PC-3 (cell line): ENCODE measurements at regions of chr10 and their contacts with region 1.

Region 1: DNA sequence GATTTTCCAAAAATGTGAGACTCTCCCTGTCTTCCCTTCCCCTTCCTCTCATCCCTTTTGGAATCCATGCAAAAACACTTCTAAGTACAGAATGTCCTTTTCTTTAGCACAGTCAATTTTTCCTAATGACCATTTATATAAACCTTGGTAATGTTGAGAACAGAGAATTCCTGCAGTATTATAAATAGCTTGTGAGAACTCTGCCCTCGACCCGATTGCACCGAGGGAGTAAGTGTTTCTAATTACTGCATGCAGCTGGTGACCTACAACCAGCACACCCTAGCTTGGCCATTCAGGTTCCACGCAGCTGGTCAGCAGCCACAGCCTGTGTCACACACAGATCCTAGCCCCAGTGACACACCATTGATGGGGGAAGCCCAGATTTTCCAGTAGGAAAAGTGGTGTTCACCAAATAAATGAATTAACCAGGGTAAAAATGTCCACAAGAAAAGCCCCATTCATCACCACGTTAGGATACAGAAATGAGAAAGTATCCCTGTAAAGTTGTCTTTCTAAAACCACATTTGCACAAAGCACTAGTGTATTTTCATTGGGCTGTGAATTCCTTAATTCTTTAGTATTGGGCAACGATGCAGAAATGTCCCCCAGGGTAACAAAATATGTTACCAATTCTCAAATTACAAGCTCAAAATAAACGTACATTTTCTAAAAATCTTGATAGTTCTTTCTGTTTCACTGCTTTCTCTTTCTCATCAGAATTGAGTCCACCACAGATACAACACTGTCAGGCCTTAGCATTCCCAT is 499.0 kb upstream of the KLF6 start:
- DNase-seq: no peak
- ATAC-seq: no peak
- H3K4me3 ChIP-seq: no peak overlapping the region
- H3K27ac ChIP-seq: no peak overlapping the region
- H3K4me1 ChIP-seq: peaks cover 29% of the 10 kb centered on the region
- H3K27me3 ChIP-seq: no peaks in the 10 kb centered on the region
- CTCF ChIP-seq: no peak

Region 2: GRCh38 chr10:4131407-4132228 is 152.4 kb before region 1 on chr10:
- CTCF ChIA-PET with region 1: no interaction called
- POLR2A ChIA-PET with region 1: no interaction called
- intact Hi-C with region 1: loop called (anchors 5 kb)
- DNase-seq: peak; percentile 66
- ATAC-seq: peak; percentile 91
- H3K4me3 ChIP-seq: peak overlapping the region; percentile 44
- H3K27ac ChIP-seq: peak overlapping the region; percentile 60
- H3K4me1 ChIP-seq: peaks cover 31% of the 10 kb centered on the region
- H3K27me3 ChIP-seq: no peaks in the 10 kb centered on the region
- CTCF ChIP-seq: no peak

Region 3: DNA sequence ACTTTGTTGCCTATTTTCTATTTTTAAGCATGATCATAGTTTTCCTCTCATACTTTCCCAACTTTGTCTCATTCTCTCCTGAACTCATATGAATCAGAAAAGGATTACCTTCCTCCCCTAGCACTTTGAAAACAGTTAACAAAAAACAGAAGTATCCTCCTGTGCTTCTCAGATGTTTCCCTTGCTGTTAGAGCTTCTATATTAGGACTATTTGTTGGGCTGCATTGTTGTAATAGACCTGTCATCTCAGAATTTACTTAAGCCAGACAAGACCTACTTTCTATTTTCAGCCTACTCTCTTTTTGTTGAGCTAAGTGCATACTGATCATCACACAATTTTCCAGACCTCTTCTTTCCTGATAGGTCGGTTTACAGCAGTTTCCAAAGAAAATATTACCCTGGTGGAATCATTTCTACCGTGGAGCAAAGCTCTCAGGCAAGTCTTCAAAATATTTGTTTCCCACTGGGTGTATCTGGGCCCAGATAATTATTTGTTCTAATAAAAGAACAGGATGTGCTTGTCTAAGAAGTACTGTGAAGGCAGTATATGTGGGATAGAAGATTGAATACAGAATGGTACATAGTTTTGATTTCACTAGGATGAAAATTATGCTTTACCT is 87.1 kb before region 1 on chr10:
- CTCF ChIA-PET with region 1: no interaction called
- POLR2A ChIA-PET with region 1: no interaction called
- intact Hi-C with region 1: no loop called
- DNase-seq: no peak
- ATAC-seq: no peak
- H3K4me3 ChIP-seq: no peak overlapping the region
- H3K27ac ChIP-seq: no peak overlapping the region
- H3K4me1 ChIP-seq: peaks cover 24% of the 10 kb centered on the region
- H3K27me3 ChIP-seq: no peaks in the 10 kb centered on the region
- CTCF ChIP-seq: no peak

Region 4: GRCh38 chr10:4303048-4303447 is 19.0 kb after region 1 on chr10:
- CTCF ChIA-PET with region 1: no interaction called
- POLR2A ChIA-PET with region 1: no interaction called
- intact Hi-C with region 1: no loop called
- DNase-seq: no peak
- ATAC-seq: no peak
- H3K4me3 ChIP-seq: no peak overlapping the region
- H3K27ac ChIP-seq: no peak overlapping the region
- H3K4me1 ChIP-seq: no peaks in the 10 kb centered on the region
- H3K27me3 ChIP-seq: no peaks in the 10 kb centered on the region
- CTCF ChIP-seq: no peak

Region 5: GRCh38 chr10:4344511-4344994 is 60.5 kb after region 1 on chr10:
- CTCF ChIA-PET with region 1: no interaction called
- POLR2A ChIA-PET with region 1: no interaction called
- intact Hi-C with region 1: loop called (anchors 2 kb)
- DNase-seq: peak; percentile 90
- ATAC-seq: peak; percentile 97
- H3K4me3 ChIP-seq: peak overlapping the region; percentile 30; the same call in 1 of the 2 replicates
- H3K27ac ChIP-seq: peak overlapping the region; percentile 91
- H3K4me1 ChIP-seq: peaks cover 15% of the 10 kb centered on the region
- H3K27me3 ChIP-seq: no peaks in the 10 kb centered on the region
- CTCF ChIP-seq: no peak

Region 6: GRCh38 chr10:4541292-4541691 is 257.3 kb after region 1 on chr10:
- CTCF ChIA-PET with region 1: no interaction called
- POLR2A ChIA-PET with region 1: no interaction called
- intact Hi-C with region 1: loop called (anchors 2 kb)
- DNase-seq: peak; percentile 88
- ATAC-seq: peak; percentile 100
- H3K4me3 ChIP-seq: no peak overlapping the region
- H3K27ac ChIP-seq: peak overlapping the region; percentile 97
- H3K4me1 ChIP-seq: peaks cover 17% of the 10 kb centered on the region
- H3K27me3 ChIP-seq: no peaks in the 10 kb centered on the region
- CTCF ChIP-seq: peak; percentile 37; the same call in 1 of the 2 replicates